ENCODE measurements at regions of chr4 and their contacts with region 1.

Region 1: DNA sequence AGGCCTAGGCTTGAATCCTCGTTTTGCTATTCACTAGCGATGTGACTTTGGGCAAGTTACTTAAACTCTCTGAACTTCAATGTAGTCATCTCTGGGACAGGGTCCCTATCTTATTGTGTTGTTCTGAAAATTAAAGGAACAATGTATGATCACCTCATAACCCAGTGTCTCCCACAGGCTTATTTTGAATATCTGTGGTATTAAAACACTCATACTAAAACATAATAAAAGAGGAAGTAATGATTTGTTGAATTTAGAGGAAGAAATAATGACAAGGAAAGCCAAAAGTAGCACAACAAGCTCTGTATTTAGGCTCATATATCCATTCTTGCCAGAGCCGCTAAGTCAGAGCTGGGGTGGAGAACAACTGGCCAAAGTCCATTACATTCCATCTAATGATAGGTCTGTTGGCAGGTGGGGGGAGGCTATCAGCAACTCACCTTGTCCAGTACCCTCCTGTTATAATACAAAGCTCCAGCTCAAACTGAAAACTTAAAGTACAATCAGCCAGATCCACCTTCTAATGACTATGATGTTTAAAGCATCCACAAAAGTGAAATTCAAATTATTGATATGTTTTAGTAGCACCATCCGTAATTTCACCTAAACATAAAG is 64.5 kb upstream of the LSM6 start:
- DNase-seq: no peak
- ATAC-seq: no peak
- H3K4me3 ChIP-seq: no peak overlapping the region
- H3K27ac ChIP-seq: no peak overlapping the region
- H3K4me1 ChIP-seq: no peaks in the 10 kb centered on the region
- H3K27me3 ChIP-seq: no peaks in the 10 kb centered on the region
- CTCF ChIP-seq: no peak
- POLR2A ChIP-seq: no peak

Region 2: DNA sequence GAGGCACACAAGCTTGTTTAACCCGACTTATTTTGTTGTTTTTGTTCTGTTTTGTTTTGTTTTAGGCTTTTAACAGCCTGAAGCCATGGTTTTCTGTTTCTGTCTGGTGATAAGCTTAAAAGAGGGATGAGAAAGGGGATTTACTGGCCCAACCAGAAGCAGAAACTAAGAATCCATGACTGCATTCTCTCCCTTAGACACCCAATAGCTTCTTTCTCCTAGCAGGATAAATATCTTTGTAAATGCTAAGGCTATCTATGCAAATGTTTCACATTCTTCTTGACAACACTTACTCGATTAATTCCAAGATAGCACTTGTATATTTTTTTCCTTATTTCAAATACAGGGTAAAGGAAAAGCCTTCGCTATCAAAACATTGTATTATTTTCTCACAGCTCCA is 683.0 kb before region 1 on chr4:
- in situ Hi-C with region 1: no loop called
- intact Hi-C with region 1: loop called (anchors 5 kb)
- DNase-seq: no peak
- ATAC-seq: no peak
- H3K4me3 ChIP-seq: no peak overlapping the region
- H3K27ac ChIP-seq: no peak overlapping the region
- H3K4me1 ChIP-seq: no peaks in the 10 kb centered on the region
- H3K27me3 ChIP-seq: no peaks in the 10 kb centered on the region
- CTCF ChIP-seq: no peak
- POLR2A ChIP-seq: no peak

Region 3: DNA sequence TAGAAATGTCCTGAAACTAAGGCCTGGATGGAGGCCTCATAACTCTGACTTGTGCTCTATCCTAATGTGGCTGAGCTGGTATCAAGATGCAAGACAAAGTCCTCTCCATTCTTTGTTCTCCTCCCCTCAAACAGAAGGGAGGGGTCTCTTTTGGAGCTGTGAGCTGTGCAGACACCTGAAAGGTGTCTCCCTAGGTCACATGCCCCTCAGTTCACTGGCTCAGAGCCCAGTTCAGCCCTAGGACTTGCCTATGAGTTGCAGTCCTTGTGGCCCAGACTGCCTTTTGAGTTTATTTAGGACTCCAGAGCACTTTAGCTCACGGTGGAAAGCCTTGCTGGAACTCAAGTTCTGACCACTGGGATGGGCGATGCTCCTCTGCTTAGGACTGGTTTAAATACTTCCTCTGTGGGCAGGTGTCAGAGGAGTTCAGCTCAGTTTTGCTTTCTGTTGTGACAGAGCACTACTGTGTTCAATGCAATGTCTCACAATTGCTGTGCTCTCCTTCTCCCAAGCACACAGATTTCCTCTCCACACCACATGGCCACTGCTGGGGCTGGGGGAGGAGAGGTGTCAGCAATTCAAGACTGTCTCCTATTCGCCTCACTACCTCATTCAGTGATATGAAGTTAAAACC is 87.5 kb before region 1 on chr4:
- in situ Hi-C with region 1: no loop called
- intact Hi-C with region 1: no loop called
- DNase-seq: no peak
- ATAC-seq: no peak
- H3K4me3 ChIP-seq: no peak overlapping the region
- H3K27ac ChIP-seq: no peak overlapping the region
- H3K4me1 ChIP-seq: no peaks in the 10 kb centered on the region
- H3K27me3 ChIP-seq: no peaks in the 10 kb centered on the region
- CTCF ChIP-seq: no peak
- POLR2A ChIP-seq: no peak

Region 4: GRCh38 chr4:146063143-146063542 is 47.8 kb before region 1 on chr4:
- in situ Hi-C with region 1: no loop called
- intact Hi-C with region 1: no loop called
- DNase-seq: no peak
- ATAC-seq: no peak
- H3K4me3 ChIP-seq: no peak overlapping the region
- H3K27ac ChIP-seq: no peak overlapping the region
- H3K4me1 ChIP-seq: no peaks in the 10 kb centered on the region
- H3K27me3 ChIP-seq: no peaks in the 10 kb centered on the region
- CTCF ChIP-seq: no peak
- POLR2A ChIP-seq: no peak